ENCODE measurements at regions of chr21 and their contacts with region 1.

Region 1: GRCh38 chr21:36149788-36150711 is 6.6 kb upstream of the DOP1B start:
- DNase-seq: no peak
- H3K4me3 Mint-ChIP-seq: no peak overlapping the region
- H3K27ac Mint-ChIP-seq: peak overlapping the region; percentile 74
- H3K4me1 Mint-ChIP-seq: peaks cover 51% of the 10 kb centered on the region
- H3K27me3 Mint-ChIP-seq: peaks cover 5% of the 10 kb centered on the region

Region 2: DNA sequence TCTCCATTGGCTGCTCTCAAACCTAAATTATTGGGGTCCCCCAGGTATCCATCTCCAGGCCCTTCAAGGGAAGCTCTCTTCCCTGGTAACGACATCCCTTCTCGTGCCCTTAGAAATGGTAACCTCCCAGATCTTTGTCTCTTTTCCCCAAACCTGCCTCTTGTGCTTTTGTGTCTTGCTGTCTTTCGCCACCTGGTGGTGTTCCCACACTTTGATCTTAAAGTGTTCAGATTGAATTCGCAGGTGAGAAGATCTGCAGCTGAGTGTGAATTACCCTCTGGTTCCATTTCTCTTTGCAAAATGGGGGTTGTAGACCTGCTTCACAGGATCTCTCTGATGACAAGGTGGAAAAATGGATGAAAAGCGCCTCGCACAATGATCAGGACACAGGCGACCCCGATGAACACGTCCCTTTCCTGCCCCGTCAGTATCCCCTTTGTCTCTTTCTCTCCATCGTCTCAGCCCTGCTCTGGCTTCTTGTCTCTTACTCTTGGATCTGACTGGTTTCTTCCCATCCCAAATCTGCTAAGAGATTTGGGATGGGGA is 59.6 kb after region 1 on chr21:
- CTCF ChIA-PET with region 1: interaction called, 59 read pairs
- POLR2A ChIA-PET with region 1: interaction called, 9 read pairs
- DNase-seq: peak; percentile 68
- H3K4me3 Mint-ChIP-seq: no peak overlapping the region
- H3K27ac Mint-ChIP-seq: no peak overlapping the region
- H3K4me1 Mint-ChIP-seq: peaks cover 37% of the 10 kb centered on the region
- H3K27me3 Mint-ChIP-seq: no peaks in the 10 kb centered on the region